ENCODE measurements at regions of chr6 and their contacts with region 1.

Region 1: DNA sequence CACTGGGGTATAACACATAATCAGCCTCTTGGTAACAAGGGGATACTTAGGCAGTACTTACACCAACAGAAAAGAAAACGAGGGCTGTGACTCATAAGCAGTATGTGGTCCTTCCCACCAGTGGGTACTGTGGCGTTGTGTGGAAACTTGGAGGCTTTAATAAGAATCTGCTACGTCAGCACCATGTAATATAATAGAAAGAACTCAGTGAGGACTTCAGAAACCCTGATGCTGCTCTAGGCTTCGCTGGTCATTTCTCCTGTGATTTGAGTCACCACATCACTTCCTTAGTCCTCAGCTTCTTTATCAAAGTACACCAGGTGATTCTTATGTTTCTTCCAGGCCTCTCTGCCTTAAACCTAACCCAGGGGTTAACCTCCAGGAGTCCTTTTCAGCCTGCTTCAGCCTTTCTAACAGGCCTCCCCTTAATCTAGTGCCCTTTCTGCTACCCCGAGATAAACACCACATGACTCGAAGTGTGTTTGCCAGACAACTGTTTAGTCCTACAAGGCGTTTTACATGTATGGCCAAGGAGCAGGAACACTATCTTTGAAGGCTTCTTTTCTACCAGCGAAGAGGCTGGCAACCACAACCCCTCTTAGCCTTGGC is 68.5 kb downstream of the FYN start:
- DNase-seq: peak in 34 of 35 experiments; percentile 36 to 86 (median 63)
- ATAC-seq: peak; percentile 73 to 83 (median 80)
- H3K4me3 ChIP-seq: no peak overlapping the region
- H3K4me3 Mint-ChIP-seq: peak overlapping the region; percentile 38 to 62 (median 58)
- H3K27ac ChIP-seq: peak overlapping the region; percentile 81
- H3K27ac Mint-ChIP-seq: peak overlapping the region; percentile 89 to 95
- H3K4me1 ChIP-seq: peaks cover 33 to 68% of the 10 kb centered on the region in 2 experiments
- H3K4me1 Mint-ChIP-seq: peaks cover 92 to 99% (median 97%) of the 10 kb centered on the region in 3 donors
- H3K27me3 ChIP-seq: no peaks in the 10 kb centered on the region
- H3K27me3 Mint-ChIP-seq: no peaks in the 10 kb centered on the region

Region 2: DNA sequence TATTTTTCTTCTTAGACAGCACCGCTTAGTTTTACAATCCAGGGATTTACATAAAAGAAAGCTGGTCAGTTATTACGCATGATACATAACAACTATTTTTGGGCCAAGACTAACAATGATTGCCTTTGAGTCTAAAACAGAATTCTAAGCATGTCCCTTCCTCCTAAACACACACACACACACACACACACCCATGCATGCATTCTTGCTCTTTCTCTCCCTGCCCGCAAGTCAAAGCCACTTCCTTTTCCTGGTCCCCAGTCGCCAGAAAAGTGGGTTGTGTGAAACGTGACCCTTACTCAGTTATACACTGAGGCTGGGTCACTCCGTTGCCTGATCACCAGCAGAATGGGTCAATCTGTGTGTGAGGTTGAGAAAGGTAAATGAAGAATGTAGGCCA is 37.1 kb after region 1 on chr6:
- CTCF ChIA-PET with region 1: interaction called, 3 to 12 read pairs
- POLR2A ChIA-PET with region 1: interaction called in 1 of 2 experiments, 26 read pairs
- DNase-seq: peak in 26 of 35 experiments; percentile 19 to 62 (median 42)
- ATAC-seq: peak in 2 of 4 experiments; percentile 17 to 18
- H3K4me3 ChIP-seq: peak overlapping the region in 1 of 2 donors; percentile 26
- H3K4me3 Mint-ChIP-seq: no peak overlapping the region
- H3K27ac ChIP-seq: peak overlapping the region; percentile 75
- H3K27ac Mint-ChIP-seq: no peak overlapping the region
- H3K4me1 ChIP-seq: peaks cover 91 to 92% of the 10 kb centered on the region in 2 experiments
- H3K4me1 Mint-ChIP-seq: no peaks in the 10 kb centered on the region
- H3K27me3 ChIP-seq: no peaks in the 10 kb centered on the region
- H3K27me3 Mint-ChIP-seq: no peaks in the 10 kb centered on the region

Measured in T-cell (primary cell).